H1 (cell line): ENCODE measurements at regions of chr19 and their contacts with region 1.

Region 1: GRCh38 chr19:6393074-6393983 is at the start of gene GTF2F1:
- DNase-seq: peak; percentile 79 to 98
- H3K4me3 ChIP-seq: peak within 1 kb of the TSS; percentile 72 to 99 (median 90)
- H3K27ac ChIP-seq: peak within 1 kb of the TSS; percentile 89
- H3K4me1 ChIP-seq: peaks cover 0 to 8% (median 7%) of the 10 kb centered on the region in 4 experiments; a peak in 5 of 7 replicates
- H3K27me3 ChIP-seq: no peaks in the 10 kb centered on the region
- CTCF ChIP-seq: no peak; a peak in 1 of 4 replicates
- EP300 ChIP-seq: 0 out of 3 replicates have a peak, but pooled peaks of 1 of the 2 experiments have one; percentile 40
- POLR2A ChIP-seq: peak in 1 of 2 experiments; percentile 58; a peak in 2 of 3 replicates
- RAD21 ChIP-seq: peak; percentile 20 to 25; a peak in 3 of 4 replicates
- total RNA-seq, gene GTF2F1: 56.3 and 60.8 TPM in 2 replicates

Region 2: GRCh38 chr19:6372594-6373095 is 20.7 kb before region 1 on chr19 and contains the start of gene ALKBH7:
- CTCF ChIA-PET with region 1: interaction called, 6 read pairs
- POLR2A ChIA-PET with region 1: interaction called, 81 read pairs
- DNase-seq: peak; percentile 92 to 97
- H3K4me3 ChIP-seq: peak within 1 kb of the TSS; percentile 82 to 100 (median 92)
- H3K27ac ChIP-seq: peak within 1 kb of the TSS; percentile 79
- H3K4me1 ChIP-seq: peaks cover 0 to 11% (median 7%) of the 10 kb centered on the region in 4 experiments; a peak in 5 of 7 replicates
- H3K27me3 ChIP-seq: no peaks in the 10 kb centered on the region
- CTCF ChIP-seq: no peak
- EP300 ChIP-seq: no peak
- POLR2A ChIP-seq: no peak; a peak in 1 of 3 replicates
- RAD21 ChIP-seq: no peak
- total RNA-seq, gene ALKBH7: 66.3 and 75.6 TPM in 2 replicates

Region 3: GRCh38 chr19:6412447-6413091 is 19.2 kb after region 1 on chr19:
- CTCF ChIA-PET with region 1: interaction called, 4 read pairs
- POLR2A ChIA-PET with region 1: interaction called, 20 read pairs
- DNase-seq: peak; percentile 57 to 90
- H3K4me3 ChIP-seq: no peak overlapping the region
- H3K27ac ChIP-seq: peak overlapping the region; percentile 37
- H3K4me1 ChIP-seq: peaks cover 0 to 12% (median 6%) of the 10 kb centered on the region in 4 experiments; a peak in 6 of 7 replicates
- H3K27me3 ChIP-seq: no peaks in the 10 kb centered on the region
- CTCF ChIP-seq: peak; percentile 79 to 92 (median 87)
- EP300 ChIP-seq: no peak
- POLR2A ChIP-seq: peak; percentile 38 to 75
- RAD21 ChIP-seq: peak; percentile 71 to 82

Region 4: GRCh38 chr19:6424939-6425731 is 31.8 kb after region 1 on chr19:
- CTCF ChIA-PET with region 1: interaction called, 3 read pairs
- POLR2A ChIA-PET with region 1: interaction called, 15 read pairs
- DNase-seq: peak; percentile 95 to 100
- H3K4me3 ChIP-seq: peak overlapping the region in 1 of 4 experiments; percentile 21; a peak in 2 of 8 replicates
- H3K27ac ChIP-seq: no peak overlapping the region
- H3K4me1 ChIP-seq: peaks cover 0 to 4% (median 0%) of the 10 kb centered on the region in 4 experiments; a peak in 2 of 7 replicates
- H3K27me3 ChIP-seq: peaks cover 0 to 6% (median 0%) of the 10 kb centered on the region in 4 experiments; a peak in 2 of 7 replicates
- CTCF ChIP-seq: no peak
- EP300 ChIP-seq: no peak
- POLR2A ChIP-seq: no peak; a peak in 1 of 3 replicates
- RAD21 ChIP-seq: no peak